Activated T-helper 1 cell treated with anti-CD3 and anti-CD28 coated beads, Interleukin-12 subunit alpha, Interleukin-12 subunit beta, Interleukin-2, Interleukin-4 antibody, amounts not matched to agents 30 ng/mL and 10 ng/mL and 1 ng/mL, durations not matched to agents 14 hours and 24 hours and 36 hours (primary cell): ENCODE measurements at regions of chr2 and their contacts with region 1.

Region 1: GRCh38 chr2:64653349-64654062 is at the start of gene SERTAD2:
- DNase-seq: peak; percentile 83
- H3K4me3 Mint-ChIP-seq: peak within 1 kb of the TSS; percentile 90
- H3K27ac Mint-ChIP-seq: peak within 1 kb of the TSS; percentile 90
- H3K4me1 Mint-ChIP-seq: peaks cover 71% of the 10 kb centered on the region
- H3K27me3 Mint-ChIP-seq: no peaks in the 10 kb centered on the region
- total RNA-seq, gene SERTAD2: 27.3 and 28.5 TPM in 2 replicates

Region 2: GRCh38 chr2:64501946-64502345 is 151.6 kb before region 1 on chr2:
- intact Hi-C with region 1: no loop called
- DNase-seq: no peak
- H3K4me3 Mint-ChIP-seq: no peak overlapping the region
- H3K27ac Mint-ChIP-seq: no peak overlapping the region
- H3K4me1 Mint-ChIP-seq: peaks cover 7% of the 10 kb centered on the region
- H3K27me3 Mint-ChIP-seq: peaks cover 16% of the 10 kb centered on the region

Region 3: GRCh38 chr2:64666810-64667438 is 13.4 kb after region 1 on chr2:
- intact Hi-C with region 1: loop called (anchors 1 kb)
- DNase-seq: no peak
- H3K4me3 Mint-ChIP-seq: peak overlapping the region; percentile 11
- H3K27ac Mint-ChIP-seq: peak overlapping the region; percentile 81
- H3K4me1 Mint-ChIP-seq: peaks cover 24% of the 10 kb centered on the region
- H3K27me3 Mint-ChIP-seq: no peaks in the 10 kb centered on the region

Region 4: GRCh38 chr2:64675860-64676259 is 22.4 kb after region 1 on chr2:
- intact Hi-C with region 1: loop called (anchors 1 kb)
- DNase-seq: peak; percentile 30
- H3K4me3 Mint-ChIP-seq: no peak overlapping the region
- H3K27ac Mint-ChIP-seq: peak overlapping the region; percentile 56
- H3K4me1 Mint-ChIP-seq: peaks cover 48% of the 10 kb centered on the region
- H3K27me3 Mint-ChIP-seq: no peaks in the 10 kb centered on the region

Region 5: GRCh38 chr2:64730551-64731262 is 77.2 kb after region 1 on chr2:
- intact Hi-C with region 1: loop called (anchors 1 kb)
- DNase-seq: peak; percentile 35
- H3K4me3 Mint-ChIP-seq: peak overlapping the region; percentile 85
- H3K27ac Mint-ChIP-seq: peak overlapping the region; percentile 89
- H3K4me1 Mint-ChIP-seq: peaks cover 77% of the 10 kb centered on the region
- H3K27me3 Mint-ChIP-seq: no peaks in the 10 kb centered on the region

Region 6: DNA sequence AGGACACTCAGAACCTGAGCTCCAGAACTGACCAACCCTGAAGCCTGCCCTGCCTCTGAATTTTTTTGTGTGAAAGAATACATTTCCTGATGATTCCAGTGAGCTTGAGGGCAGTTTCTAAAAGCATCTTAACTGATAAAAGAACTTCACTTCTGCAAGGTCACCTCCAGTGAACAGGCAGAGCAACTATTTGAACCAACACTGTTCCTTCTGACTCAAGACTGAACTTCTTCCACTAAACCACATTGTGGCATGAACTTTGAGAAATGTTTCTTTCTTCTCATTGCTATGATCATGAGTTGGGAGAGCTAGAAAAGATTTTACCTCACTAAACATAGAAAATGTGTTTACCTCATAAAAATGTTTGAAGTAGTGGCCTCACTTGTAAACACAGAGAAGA is 84.0 kb after region 1 on chr2:
- intact Hi-C with region 1: loop called (anchors 1 kb)
- DNase-seq: no peak
- H3K4me3 Mint-ChIP-seq: peak overlapping the region; percentile 46
- H3K27ac Mint-ChIP-seq: peak overlapping the region; percentile 91
- H3K4me1 Mint-ChIP-seq: peaks cover 54% of the 10 kb centered on the region
- H3K27me3 Mint-ChIP-seq: no peaks in the 10 kb centered on the region